ENCODE measurements at regions of chr2 and their contacts with region 1.

Region 1: GRCh38 chr2:43024515-43025011 is 201.8 kb downstream of the ZFP36L2 start:
- DNase-seq: peak; percentile 86
- H3K4me3 Mint-ChIP-seq: no peak overlapping the region
- H3K27ac Mint-ChIP-seq: peak overlapping the region; percentile 62
- H3K4me1 Mint-ChIP-seq: peaks cover 56% of the 10 kb centered on the region
- H3K27me3 Mint-ChIP-seq: no peaks in the 10 kb centered on the region
- CTCF ChIP-seq: peak; percentile 86

Region 2: DNA sequence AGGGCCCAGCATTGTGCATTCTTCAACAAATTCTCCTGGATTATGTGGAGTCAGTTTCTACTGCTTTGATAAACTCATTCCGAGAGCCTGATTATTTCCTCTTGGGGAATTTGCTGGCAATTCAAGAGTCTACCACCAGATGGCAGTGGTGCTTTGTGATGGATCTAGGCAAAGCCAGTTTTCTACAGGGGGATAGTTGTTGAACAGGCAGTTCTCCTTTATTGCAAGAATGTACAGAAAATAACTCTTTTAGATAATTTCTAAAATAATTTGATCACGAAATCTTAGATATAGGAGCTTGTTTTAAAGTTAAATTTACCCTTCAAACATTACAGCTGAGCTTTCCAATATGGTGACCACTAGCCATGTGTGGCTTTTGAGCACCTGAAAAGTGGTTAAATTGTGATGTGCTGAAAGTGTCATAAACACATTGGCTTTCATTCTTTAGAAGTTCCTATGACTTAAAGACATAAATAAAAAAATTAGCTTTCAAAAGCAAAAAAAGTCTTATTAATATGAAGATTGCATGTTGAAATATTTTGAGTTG is 165.5 kb before region 1 on chr2:
- CTCF ChIA-PET with region 1: no interaction called
- intact Hi-C with region 1: loop called (anchors 1 kb)
- DNase-seq: peak; percentile 84
- H3K4me3 Mint-ChIP-seq: no peak overlapping the region
- H3K27ac Mint-ChIP-seq: no peak overlapping the region
- H3K4me1 Mint-ChIP-seq: peaks cover 8% of the 10 kb centered on the region
- H3K27me3 Mint-ChIP-seq: no peaks in the 10 kb centered on the region
- CTCF ChIP-seq: peak; percentile 82

Region 3: GRCh38 chr2:42974721-42975717 is 49.5 kb before region 1 on chr2:
- CTCF ChIA-PET with region 1: interaction called, 19 read pairs
- intact Hi-C with region 1: loop called (anchors 1 kb)
- DNase-seq: peak; percentile 85
- H3K4me3 Mint-ChIP-seq: no peak overlapping the region
- H3K27ac Mint-ChIP-seq: peak overlapping the region; percentile 86
- H3K4me1 Mint-ChIP-seq: peaks cover 73% of the 10 kb centered on the region
- H3K27me3 Mint-ChIP-seq: no peaks in the 10 kb centered on the region
- CTCF ChIP-seq: peak; percentile 92

Region 4: DNA sequence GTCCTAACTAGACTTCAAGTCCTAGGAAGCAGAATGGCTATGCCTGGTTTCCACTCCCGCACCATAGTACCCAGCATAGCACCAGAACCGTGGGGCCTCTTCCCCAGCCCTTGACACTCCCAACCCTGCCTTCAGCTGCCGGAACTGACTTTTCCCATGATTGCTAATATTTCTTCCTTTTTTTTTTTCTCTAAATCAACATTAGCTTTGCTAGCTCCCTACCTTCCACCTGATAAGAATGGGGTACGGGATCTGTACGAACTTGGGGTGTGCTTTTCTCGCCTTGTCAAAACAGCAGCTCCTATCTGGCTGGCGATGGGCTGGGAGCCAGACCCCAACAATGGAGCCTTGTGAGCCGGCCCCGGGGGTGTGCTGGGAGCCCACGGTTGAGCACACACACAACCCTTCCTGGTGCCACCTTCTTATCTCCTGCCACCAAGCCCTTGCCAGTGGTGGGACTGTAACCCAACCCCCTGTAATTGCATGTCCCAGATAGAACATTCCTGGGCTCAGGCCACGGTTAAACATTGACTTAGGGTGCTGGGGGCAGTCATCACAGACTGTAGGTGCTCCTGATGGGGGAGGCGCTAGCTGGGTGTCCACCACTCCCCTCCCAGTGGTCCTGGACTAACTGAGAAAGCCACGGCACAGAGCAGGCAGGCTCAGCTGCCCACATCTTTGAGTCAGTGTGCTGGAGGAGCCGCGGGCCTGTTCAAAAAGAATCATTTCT is 19.2 kb before region 1 on chr2:
- CTCF ChIA-PET with region 1: interaction called, 5 read pairs
- intact Hi-C with region 1: loop called (anchors 2 kb)
- DNase-seq: peak; percentile 95
- H3K4me3 Mint-ChIP-seq: peak overlapping the region; percentile 61
- H3K27ac Mint-ChIP-seq: peak overlapping the region; percentile 93
- H3K4me1 Mint-ChIP-seq: peaks cover 86% of the 10 kb centered on the region
- H3K27me3 Mint-ChIP-seq: no peaks in the 10 kb centered on the region
- CTCF ChIP-seq: no peak

Region 5: GRCh38 chr2:43226558-43226954 is 202.0 kb after region 1 on chr2 and contains the start of gene ZFP36L2:
- CTCF ChIA-PET with region 1: interaction called, 9 read pairs
- intact Hi-C with region 1: loop called (anchors 1 kb)
- DNase-seq: peak; percentile 98
- H3K4me3 Mint-ChIP-seq: peak within 1 kb of the TSS; percentile 98
- H3K27ac Mint-ChIP-seq: peak within 1 kb of the TSS; percentile 94
- H3K4me1 Mint-ChIP-seq: peaks cover 26% of the 10 kb centered on the region
- H3K27me3 Mint-ChIP-seq: no peaks in the 10 kb centered on the region
- CTCF ChIP-seq: no peak
- total RNA-seq, gene ZFP36L2: 90.7 and 120 TPM in 2 replicates